A673 (cell line): ENCODE measurements at regions of chr3 and their contacts with region 1.

Region 1: GRCh38 chr3:47989981-47990440 is 26.2 kb downstream of the MAP4 start:
- DNase-seq: peak; percentile 82
- H3K4me3 ChIP-seq: no peak overlapping the region
- H3K27ac ChIP-seq: no peak overlapping the region
- H3K4me1 ChIP-seq: peaks cover 15% of the 10 kb centered on the region
- H3K27me3 ChIP-seq: no peaks in the 10 kb centered on the region
- CTCF ChIP-seq: peak; percentile 73

Region 2: GRCh38 chr3:48151058-48151806 is 161.2 kb after region 1 on chr3:
- CTCF ChIA-PET with region 1: no interaction called
- POLR2A ChIA-PET with region 1: no interaction called
- intact Hi-C with region 1: loop called (anchors 10 kb)
- DNase-seq: peak; percentile 74
- H3K4me3 ChIP-seq: no peak overlapping the region
- H3K27ac ChIP-seq: no peak overlapping the region
- H3K4me1 ChIP-seq: no peaks in the 10 kb centered on the region
- H3K27me3 ChIP-seq: no peaks in the 10 kb centered on the region
- CTCF ChIP-seq: peak; percentile 66